PC-3 (cell line): ENCODE measurements at regions of chr9 and their contacts with region 1.

Region 1: DNA sequence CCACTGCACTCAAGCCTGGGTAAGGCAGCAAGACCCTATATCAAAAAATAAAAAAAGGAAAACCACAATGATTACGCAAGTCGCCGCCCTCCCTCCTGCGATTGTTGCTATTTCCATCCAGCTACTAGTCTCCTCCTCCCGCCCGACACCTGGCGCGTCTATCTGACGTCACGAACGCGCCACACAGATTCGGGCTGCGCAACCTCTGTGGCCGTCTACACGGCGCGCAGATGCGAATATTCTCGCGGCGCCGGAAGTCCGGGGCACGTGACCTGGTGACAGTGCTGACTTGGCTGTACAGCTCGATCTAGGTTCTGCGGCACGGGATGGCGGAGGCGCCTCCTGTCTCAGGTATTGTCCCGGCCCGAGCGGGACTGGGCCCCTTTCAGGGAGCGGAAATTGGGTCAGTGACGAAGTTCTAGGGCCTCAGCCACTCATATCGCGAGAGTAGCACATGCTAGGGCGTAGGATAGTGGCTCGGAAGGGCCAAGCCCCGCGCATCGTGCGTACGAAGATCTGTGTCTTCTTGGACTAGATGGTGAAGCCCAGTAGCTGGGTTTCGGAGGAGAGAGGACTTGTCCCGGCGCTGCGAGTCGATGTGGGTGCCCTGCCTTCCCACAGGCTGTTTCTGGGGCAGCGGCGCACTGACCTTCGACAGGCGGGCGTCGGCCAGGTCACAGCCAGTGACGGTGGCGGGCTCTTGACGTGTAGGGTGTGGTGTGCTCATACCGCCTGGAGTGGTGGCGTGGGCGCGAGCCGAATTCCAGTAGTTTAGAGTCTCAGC is at the start of gene NFX1:
- DNase-seq: peak; percentile 96
- ATAC-seq: peak; percentile 94
- H3K4me3 ChIP-seq: peak within 1 kb of the TSS; percentile 79
- H3K27ac ChIP-seq: peak within 1 kb of the TSS; percentile 97
- H3K4me1 ChIP-seq: peaks cover 17% of the 10 kb centered on the region
- H3K27me3 ChIP-seq: no peaks in the 10 kb centered on the region
- CTCF ChIP-seq: no peak
- total RNA-seq, gene NFX1: 12.5 and 15.4 TPM in 2 replicates

Region 2: DNA sequence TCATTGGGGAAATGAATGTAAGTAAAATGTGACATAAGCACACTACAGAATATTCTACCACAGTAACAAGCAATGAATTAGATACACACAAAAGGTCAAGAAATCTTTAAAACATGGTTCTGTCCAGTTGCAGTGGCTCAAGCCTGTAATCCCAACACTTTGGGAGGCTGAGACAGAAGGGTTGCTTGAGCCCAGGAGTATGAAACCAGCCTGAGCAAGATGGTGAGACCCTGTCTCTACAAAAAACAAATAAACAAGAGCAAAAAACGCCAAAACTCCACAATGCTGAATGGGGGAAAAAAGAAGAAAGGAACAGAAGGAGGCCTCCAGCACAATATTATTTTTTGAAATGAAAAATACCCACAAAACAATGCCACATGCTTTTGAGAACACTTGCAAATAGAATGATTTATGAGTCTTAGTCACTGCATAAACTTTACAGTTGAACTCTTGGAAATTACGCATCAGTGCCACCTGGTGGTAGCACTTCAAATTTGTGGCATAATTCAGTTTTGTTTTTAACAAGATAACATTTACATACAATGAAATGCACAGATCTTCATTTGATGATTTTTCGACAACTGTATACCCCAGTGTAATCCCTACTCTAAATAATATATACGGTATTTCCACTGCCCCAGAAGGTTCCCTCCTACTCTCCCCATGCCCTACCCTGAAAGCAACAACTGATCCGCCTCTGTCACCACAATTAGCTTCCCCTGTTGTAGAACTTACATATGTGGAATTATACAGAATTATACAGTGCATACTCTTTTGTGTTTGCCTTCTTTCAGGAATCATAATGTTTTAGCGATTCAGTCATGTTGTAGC is 64.9 kb before region 1 on chr9:
- CTCF ChIA-PET with region 1: no interaction called
- POLR2A ChIA-PET with region 1: no interaction called
- intact Hi-C with region 1: loop called (anchors 2 kb)
- DNase-seq: peak; percentile 85
- ATAC-seq: peak; percentile 26; the same call in 1 of the 2 replicates
- H3K4me3 ChIP-seq: no peak overlapping the region
- H3K27ac ChIP-seq: peak overlapping the region; percentile 58
- H3K4me1 ChIP-seq: peaks cover 28% of the 10 kb centered on the region
- H3K27me3 ChIP-seq: no peaks in the 10 kb centered on the region
- CTCF ChIP-seq: peak; percentile 72

Region 3: DNA sequence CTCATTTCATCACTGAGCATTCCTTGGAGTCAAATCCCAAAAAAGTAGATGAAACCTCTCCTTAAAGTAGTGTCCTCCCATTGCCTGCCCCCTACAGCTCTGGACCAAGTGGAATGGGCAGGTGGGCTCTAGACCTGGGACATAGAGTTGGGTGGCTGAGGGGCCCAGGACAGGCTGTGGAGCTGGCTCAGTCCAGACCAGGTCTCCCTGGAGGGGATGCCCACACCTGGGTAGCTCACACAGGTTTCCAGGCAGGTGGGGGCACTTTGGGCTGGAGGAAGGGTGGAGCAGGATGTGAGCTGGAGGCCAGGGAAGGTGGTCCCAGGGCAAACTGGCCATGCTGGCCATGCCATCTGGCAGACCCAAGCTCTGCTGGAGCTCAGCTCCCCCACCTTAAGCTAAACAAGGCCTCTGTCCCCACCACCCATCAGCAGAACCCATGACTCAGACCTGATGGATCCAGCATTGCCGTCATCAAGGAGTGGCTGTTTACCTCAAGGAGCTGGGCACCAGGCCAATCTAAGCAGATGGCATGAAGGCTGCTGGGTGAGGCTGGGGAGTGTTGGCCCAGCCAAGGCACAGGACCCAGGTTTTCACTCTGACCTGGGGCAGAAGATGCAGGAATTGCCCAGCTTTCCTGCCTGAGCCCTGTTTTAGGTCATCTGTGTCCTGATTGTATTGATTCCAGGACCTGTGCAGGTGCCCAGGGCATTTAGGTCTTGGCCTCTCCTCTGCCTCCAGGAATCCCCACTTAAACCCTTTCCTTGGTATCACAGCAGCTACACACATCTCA is 56.6 kb before region 1 on chr9:
- CTCF ChIA-PET with region 1: interaction called, 10 read pairs
- POLR2A ChIA-PET with region 1: no interaction called
- intact Hi-C with region 1: loop called (anchors 2 kb)
- DNase-seq: peak; percentile 97
- ATAC-seq: peak; percentile 81
- H3K4me3 ChIP-seq: no peak overlapping the region
- H3K27ac ChIP-seq: peak overlapping the region; percentile 98
- H3K4me1 ChIP-seq: peaks cover 52% of the 10 kb centered on the region
- H3K27me3 ChIP-seq: no peaks in the 10 kb centered on the region
- CTCF ChIP-seq: no peak

Region 4: GRCh38 chr9:33329117-33329563 is 38.7 kb after region 1 on chr9:
- CTCF ChIA-PET with region 1: no interaction called
- POLR2A ChIA-PET with region 1: interaction called, 3 read pairs
- intact Hi-C with region 1: loop called (anchors 2 kb)
- DNase-seq: peak; percentile 98
- ATAC-seq: peak; percentile 91
- H3K4me3 ChIP-seq: no peak overlapping the region
- H3K27ac ChIP-seq: peak overlapping the region; percentile 94
- H3K4me1 ChIP-seq: peaks cover 32% of the 10 kb centered on the region
- H3K27me3 ChIP-seq: no peaks in the 10 kb centered on the region
- CTCF ChIP-seq: no peak

Region 5: GRCh38 chr9:33350310-33350709 is 59.9 kb after region 1 on chr9:
- CTCF ChIA-PET with region 1: no interaction called
- POLR2A ChIA-PET with region 1: interaction called, 19 read pairs
- intact Hi-C with region 1: loop called (anchors 2 kb)
- DNase-seq: peak; percentile 87
- ATAC-seq: peak; percentile 96
- H3K4me3 ChIP-seq: no peak overlapping the region
- H3K27ac ChIP-seq: peak overlapping the region; percentile 87
- H3K4me1 ChIP-seq: peaks cover 35% of the 10 kb centered on the region
- H3K27me3 ChIP-seq: no peaks in the 10 kb centered on the region
- CTCF ChIP-seq: no peak